GM10248 (cell line): ENCODE measurements at regions of chr16 and their contacts with region 1.

Region 1: GRCh38 chr16:68756250-68756915 is 19.3 kb downstream of the CDH1 start:
- DNase-seq: peak; percentile 80
- CTCF ChIP-seq: no peak

Region 2: DNA sequence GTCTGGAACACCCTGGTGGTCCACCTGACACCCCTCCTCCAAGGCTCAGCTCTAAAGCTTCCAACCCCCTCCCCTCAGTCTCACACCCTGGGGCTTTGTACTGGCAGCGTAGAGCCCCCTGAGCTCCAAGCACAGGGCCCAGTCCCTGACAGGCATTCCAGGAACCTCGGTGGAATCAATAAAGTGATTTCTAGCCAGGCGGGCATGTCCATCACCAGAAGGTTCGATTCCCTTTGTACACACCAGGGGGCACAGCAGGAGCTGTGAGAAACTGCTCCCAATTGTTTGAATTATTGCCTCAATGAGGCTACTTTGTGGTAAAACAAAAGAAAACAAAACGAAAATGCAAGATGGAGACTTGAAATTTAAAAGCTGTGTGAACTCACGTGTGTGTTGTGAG is 359.9 kb before region 1 on chr16:
- CTCF ChIA-PET with region 1: no interaction called
- POLR2A ChIA-PET with region 1: no interaction called
- DNase-seq: no peak
- CTCF ChIP-seq: peak; percentile 40

Region 3: GRCh38 chr16:68739964-68740627 is 16.3 kb before region 1 on chr16:
- CTCF ChIA-PET with region 1: interaction called, 6 read pairs
- POLR2A ChIA-PET with region 1: interaction called, 13 read pairs
- DNase-seq: no peak
- CTCF ChIP-seq: no peak

Region 4: DNA sequence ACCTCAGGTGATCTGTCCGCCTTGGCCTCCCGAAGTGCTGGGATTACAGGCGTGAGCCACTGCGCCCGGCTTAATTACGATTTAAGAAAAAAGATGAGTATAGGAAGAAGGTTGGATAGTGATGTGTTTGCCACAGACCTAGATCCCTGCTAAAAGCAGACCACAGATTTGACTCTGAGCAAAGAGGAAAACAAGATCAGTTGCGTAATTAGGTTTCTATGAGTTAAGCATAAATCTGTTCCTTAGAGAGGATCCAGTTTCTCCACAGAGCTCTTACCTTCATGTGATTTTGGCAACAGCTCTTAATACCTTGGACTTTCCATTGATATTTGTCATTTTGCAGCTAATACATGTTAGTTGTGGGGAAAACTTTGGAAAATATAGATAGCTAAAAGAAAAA is 11.8 kb after region 1 on chr16:
- CTCF ChIA-PET with region 1: interaction called, 7 read pairs
- POLR2A ChIA-PET with region 1: interaction called, 11 read pairs
- DNase-seq: no peak
- CTCF ChIP-seq: no peak